ENCODE measurements at regions of chr20 and their contacts with region 1.

Region 1: GRCh38 chr20:62953839-62954703 is 1.6 kb downstream of the SLC17A9 start:
- DNase-seq: peak; percentile 85
- H3K4me3 Mint-ChIP-seq: peak overlapping the region; percentile 73
- H3K27ac Mint-ChIP-seq: peak overlapping the region; percentile 96
- H3K4me1 Mint-ChIP-seq: peaks cover 34% of the 10 kb centered on the region
- H3K27me3 Mint-ChIP-seq: no peaks in the 10 kb centered on the region

Region 2: DNA sequence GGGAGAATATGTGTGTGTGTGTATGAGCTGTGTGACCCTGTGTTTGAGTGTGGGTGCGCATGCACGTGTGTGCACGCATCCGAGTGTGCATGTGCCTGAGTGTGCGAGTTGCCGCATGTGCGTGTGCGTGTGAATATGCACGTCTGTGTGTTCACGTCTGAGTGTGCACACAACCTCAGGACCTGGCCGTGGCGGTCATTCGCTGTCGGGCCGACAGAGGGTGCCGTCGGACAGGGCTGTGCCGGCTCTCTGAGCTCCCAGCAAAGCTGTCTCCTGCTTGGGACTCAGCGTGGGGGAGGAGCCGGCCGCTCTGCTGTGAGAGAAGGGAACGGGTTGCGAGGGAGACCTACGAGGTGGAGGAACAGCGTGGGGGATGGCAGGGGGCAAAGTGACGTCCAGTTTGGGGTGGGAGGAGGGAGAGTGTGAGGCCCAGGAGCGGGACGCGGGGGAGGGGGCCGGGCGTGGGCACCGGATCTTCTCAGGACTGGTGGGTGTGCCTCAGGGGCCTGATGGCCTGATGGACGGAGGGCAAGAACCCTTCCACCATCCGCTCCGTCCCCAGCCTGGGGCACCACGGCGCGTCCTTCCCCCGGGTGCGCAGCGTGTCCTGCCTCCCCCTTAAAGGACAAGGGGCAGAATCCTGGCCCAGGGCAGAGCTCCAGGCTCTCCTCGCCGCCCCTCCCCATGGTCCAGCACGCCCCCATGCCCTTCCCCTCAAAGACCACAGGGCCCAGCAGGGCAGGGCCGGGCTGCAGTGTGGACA is 18.4 kb after region 1 on chr20:
- CTCF ChIA-PET with region 1: interaction called, 11 read pairs
- POLR2A ChIA-PET with region 1: no interaction called
- DNase-seq: peak; percentile 86
- H3K4me3 Mint-ChIP-seq: no peak overlapping the region
- H3K27ac Mint-ChIP-seq: no peak overlapping the region
- H3K4me1 Mint-ChIP-seq: peaks cover 19% of the 10 kb centered on the region
- H3K27me3 Mint-ChIP-seq: peaks cover 45% of the 10 kb centered on the region

Region 3: DNA sequence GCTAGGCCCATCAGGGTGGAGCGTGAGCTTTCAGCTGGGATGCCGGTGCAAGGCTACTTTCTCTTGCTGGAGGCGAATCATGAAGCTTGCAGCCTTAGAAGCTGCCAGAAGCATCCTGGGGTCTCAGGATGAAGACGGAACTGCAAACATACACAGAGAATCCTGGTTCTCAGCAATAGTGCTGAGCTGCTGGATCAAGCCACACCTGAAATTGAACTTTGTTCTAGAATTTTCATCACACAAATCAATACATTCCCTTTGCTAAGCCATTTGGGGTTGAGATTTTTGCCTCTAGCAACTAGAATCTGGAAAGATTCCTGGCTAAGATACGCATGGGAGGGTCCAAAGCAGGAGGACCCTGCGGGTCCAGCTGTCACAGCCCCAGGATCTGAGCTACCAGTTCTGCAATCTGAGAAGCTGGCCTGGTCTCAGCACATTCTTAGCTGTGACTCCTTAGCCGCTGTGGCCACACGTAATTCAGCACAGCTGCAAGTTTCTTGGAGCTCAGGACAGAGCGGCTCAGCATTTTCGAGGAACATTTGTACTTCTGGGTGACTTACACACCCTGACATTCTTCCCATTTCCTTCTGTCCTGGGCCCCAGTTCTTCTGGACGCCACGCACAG is 311.9 kb after region 1 on chr20:
- CTCF ChIA-PET with region 1: no interaction called
- POLR2A ChIA-PET with region 1: no interaction called
- DNase-seq: no peak
- H3K4me3 Mint-ChIP-seq: no peak overlapping the region
- H3K27ac Mint-ChIP-seq: no peak overlapping the region
- H3K4me1 Mint-ChIP-seq: peaks cover 2% of the 10 kb centered on the region
- H3K27me3 Mint-ChIP-seq: peaks cover 2% of the 10 kb centered on the region

Measured in activated CD4-positive, alpha-beta T cell treated with anti-CD3 and anti-CD28 coated beads, Interleukin-2, amount 10 ng/mL, durations not matched to agents 7 days and 5 days (primary cell).